ENCODE measurements at regions of chr12 and their contacts with region 1.

Region 1: GRCh38 chr12:89135976-89136634 is 216.2 kb downstream of the DUSP6 start:
- DNase-seq: peak in 1 of 2 experiments; percentile 46
- H3K4me3 ChIP-seq: no peak overlapping the region
- H3K27ac ChIP-seq: peak overlapping the region; percentile 45
- H3K4me1 ChIP-seq: peaks cover 13% of the 10 kb centered on the region
- H3K27me3 ChIP-seq: no peaks in the 10 kb centered on the region
- CTCF ChIP-seq: no peak

Region 2: GRCh38 chr12:88241862-88242570 is 894.1 kb before region 1 on chr12:
- CTCF ChIA-PET with region 1: no interaction called
- POLR2A ChIA-PET with region 1: no interaction called
- intact Hi-C with region 1: no loop called
- DNase-seq: peak; percentile 12 to 66
- H3K4me3 ChIP-seq: no peak overlapping the region
- H3K27ac ChIP-seq: peak overlapping the region; percentile 18
- H3K4me1 ChIP-seq: peaks cover 7% of the 10 kb centered on the region; the same call in 1 of the 2 replicates
- H3K27me3 ChIP-seq: no peaks in the 10 kb centered on the region
- CTCF ChIP-seq: no peak

Region 3: GRCh38 chr12:88420457-88420856 is 715.6 kb before region 1 on chr12:
- CTCF ChIA-PET with region 1: no interaction called
- POLR2A ChIA-PET with region 1: no interaction called
- intact Hi-C with region 1: no loop called
- DNase-seq: peak in 1 of 2 experiments; percentile 53
- H3K4me3 ChIP-seq: no peak overlapping the region
- H3K27ac ChIP-seq: no peak overlapping the region
- H3K4me1 ChIP-seq: no peaks in the 10 kb centered on the region
- H3K27me3 ChIP-seq: no peaks in the 10 kb centered on the region
- CTCF ChIP-seq: no peak

Region 4: DNA sequence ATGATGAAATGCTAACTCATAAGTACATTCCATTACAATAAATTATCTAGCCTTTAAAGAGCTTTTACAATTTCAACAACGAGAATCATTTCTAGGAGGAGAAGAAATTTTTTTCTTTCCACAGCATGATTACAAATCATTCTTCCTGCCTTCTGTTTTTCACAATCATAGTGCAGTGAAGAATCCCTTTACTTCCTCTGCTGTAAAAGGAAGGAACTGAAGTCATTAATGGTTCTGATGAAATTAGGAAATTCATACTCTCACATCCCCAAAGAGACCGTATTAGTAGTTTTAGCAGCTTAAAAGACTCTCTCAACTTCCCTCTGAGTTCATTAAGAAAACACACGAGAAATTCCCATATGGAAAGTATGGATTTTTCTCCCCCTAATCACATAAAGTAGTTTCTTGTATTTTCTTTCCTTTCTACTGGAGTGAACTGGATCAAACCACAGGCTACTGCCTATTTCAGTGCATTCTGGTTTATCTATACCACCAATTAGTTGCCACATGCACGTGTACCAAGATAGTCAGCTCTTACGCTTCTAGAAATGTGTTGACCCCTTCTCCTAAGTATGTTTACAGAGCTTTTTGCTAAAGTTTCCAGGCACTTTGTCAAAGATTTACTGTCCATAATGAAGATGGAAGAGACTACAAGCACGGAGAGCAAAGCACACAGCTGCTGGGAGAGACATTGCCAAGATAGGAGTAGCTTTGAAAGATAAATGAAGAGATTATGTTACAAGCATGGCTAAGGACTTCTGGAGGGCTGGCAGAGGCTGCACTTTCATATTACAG is 496.9 kb before region 1 on chr12:
- CTCF ChIA-PET with region 1: no interaction called
- POLR2A ChIA-PET with region 1: no interaction called
- intact Hi-C with region 1: no loop called
- DNase-seq: no peak
- H3K4me3 ChIP-seq: no peak overlapping the region
- H3K27ac ChIP-seq: no peak overlapping the region
- H3K4me1 ChIP-seq: no peaks in the 10 kb centered on the region
- H3K27me3 ChIP-seq: no peaks in the 10 kb centered on the region
- CTCF ChIP-seq: no peak

Region 5: DNA sequence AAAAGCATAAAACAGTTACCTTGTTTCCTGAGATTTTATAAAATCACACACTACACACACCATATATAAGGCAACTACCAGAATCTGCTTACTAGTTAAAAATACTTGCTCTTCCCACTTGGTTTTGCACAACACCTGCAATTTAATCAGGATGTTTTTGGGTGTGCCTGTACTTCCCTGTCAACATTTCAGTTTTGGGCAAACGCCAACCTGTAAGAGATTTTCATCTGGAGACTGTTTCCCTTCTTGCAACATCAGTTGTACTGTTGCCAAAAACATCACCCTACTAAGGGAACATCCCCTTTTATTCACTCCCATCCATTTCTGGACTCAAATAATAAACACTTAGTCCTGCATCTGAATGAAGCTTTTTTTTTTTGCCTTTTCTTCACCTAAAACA is 43.9 kb after region 1 on chr12:
- CTCF ChIA-PET with region 1: no interaction called
- POLR2A ChIA-PET with region 1: interaction called, 14 read pairs
- intact Hi-C with region 1: no loop called
- DNase-seq: peak; percentile 50 to 88
- H3K4me3 ChIP-seq: no peak overlapping the region
- H3K27ac ChIP-seq: peak overlapping the region; percentile 68
- H3K4me1 ChIP-seq: peaks cover 56% of the 10 kb centered on the region
- H3K27me3 ChIP-seq: no peaks in the 10 kb centered on the region
- CTCF ChIP-seq: no peak

Measured in PC-9 (cell line).